HCT116 (cell line): ENCODE measurements at regions of chr11 and their contacts with region 1.

Region 1: GRCh38 chr11:47688111-47688510 is 27.1 kb downstream of the AGBL2 start:
- DNase-seq: no peak
- ATAC-seq: no peak
- H3K4me3 ChIP-seq: no peak overlapping the region
- H3K27ac ChIP-seq: no peak overlapping the region
- H3K4me1 ChIP-seq: no peaks in the 10 kb centered on the region
- H3K27me3 ChIP-seq: no peaks in the 10 kb centered on the region
- CTCF ChIP-seq: no peak
- POLR2A ChIP-seq: no peak
- RAD21 ChIP-seq: no peak

Region 2: DNA sequence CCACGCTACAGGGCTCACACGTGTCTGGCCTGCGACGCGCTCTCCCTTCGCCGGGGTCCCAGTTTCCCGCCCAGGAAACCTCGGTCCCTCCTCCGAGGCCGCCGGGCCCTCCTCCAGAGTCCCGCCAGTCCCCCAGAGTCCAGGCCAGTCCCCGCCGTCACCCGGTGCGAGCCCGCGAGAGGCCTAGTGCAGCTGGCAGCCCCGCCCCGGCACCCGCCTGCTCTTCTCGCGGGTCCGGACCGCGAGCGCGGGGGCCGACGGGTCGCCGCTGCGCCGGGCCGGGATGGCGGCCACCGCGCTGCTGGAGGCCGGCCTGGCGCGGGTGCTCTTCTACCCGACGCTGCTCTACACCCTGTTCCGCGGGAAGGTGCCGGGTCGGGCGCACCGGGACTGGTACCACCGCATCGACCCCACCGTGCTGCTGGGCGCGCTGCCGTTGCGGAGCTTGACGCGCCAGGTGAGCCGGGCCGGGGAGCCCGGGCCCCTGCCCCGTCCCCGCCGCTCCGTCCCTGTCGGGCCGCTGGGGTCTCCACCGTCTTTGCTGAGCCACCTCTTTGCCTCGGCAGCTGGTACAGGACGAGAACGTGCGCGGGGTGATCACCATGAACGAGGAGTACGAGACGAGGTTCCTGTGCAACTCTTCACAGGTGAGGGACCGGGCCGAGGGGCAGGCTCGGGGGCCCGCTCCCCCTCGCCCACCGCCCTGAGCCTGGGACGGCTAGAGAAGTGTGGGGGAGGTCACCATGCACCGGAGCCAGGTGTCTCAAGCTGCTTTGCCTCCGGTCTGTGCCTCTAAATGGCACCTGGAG is 122.6 kb before region 1 on chr11 and contains the start of gene PTPMT1:
- CTCF ChIA-PET with region 1: no interaction called
- POLR2A ChIA-PET with region 1: no interaction called
- RAD21 ChIA-PET with region 1: no interaction called
- intact Hi-C with region 1: no loop called
- DNase-seq: peak; percentile 40
- ATAC-seq: peak; percentile 92
- H3K4me3 ChIP-seq: peak within 1 kb of the TSS; percentile 91 to 92
- H3K27ac ChIP-seq: peak within 1 kb of the TSS; percentile 70
- H3K4me1 ChIP-seq: peaks cover 6 to 22% of the 10 kb centered on the region in 2 experiments
- H3K27me3 ChIP-seq: no peaks in the 10 kb centered on the region
- CTCF ChIP-seq: no peak
- POLR2A ChIP-seq: peak; percentile 92
- RAD21 ChIP-seq: no peak
- total RNA-seq, gene PTPMT1: 71.6 TPM

Region 3: GRCh38 chr11:47656260-47656885 is 31.7 kb before region 1 on chr11:
- CTCF ChIA-PET with region 1: no interaction called
- POLR2A ChIA-PET with region 1: no interaction called
- RAD21 ChIA-PET with region 1: no interaction called
- intact Hi-C with region 1: loop called (anchors 1 kb)
- DNase-seq: no peak
- ATAC-seq: no peak
- H3K4me3 ChIP-seq: no peak overlapping the region
- H3K27ac ChIP-seq: no peak overlapping the region
- H3K4me1 ChIP-seq: no peaks in the 10 kb centered on the region
- H3K27me3 ChIP-seq: no peaks in the 10 kb centered on the region
- CTCF ChIP-seq: no peak
- POLR2A ChIP-seq: no peak
- RAD21 ChIP-seq: no peak